PC-3 (cell line): ENCODE measurements at regions of chr11 and their contacts with region 1.

Region 1: DNA sequence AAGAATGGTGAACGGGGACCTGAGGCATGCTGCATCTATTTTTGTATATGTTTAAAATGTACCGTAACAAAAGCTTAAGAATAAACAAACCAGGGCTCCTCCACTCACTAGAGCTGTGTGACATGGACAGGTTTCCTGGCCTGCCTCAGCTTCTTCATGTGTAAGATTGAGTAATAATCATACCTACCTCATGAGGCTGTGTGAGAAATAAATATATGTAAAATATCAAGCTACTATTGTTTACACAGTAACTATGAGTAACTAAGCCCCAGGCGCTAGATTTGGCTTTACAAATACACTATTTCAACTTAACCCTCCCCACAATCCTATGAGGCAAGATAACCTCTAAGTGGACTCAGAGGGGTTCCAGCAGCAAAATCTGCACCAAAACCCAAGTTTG is 66.4 kb downstream of the SMCO4 start:
- DNase-seq: peak; percentile 98
- ATAC-seq: peak; percentile 79
- H3K4me3 ChIP-seq: peak overlapping the region; percentile 11; the same call in 1 of the 2 replicates
- H3K27ac ChIP-seq: peak overlapping the region; percentile 89
- H3K4me1 ChIP-seq: peaks cover 44% of the 10 kb centered on the region
- H3K27me3 ChIP-seq: no peaks in the 10 kb centered on the region
- CTCF ChIP-seq: no peak

Region 2: DNA sequence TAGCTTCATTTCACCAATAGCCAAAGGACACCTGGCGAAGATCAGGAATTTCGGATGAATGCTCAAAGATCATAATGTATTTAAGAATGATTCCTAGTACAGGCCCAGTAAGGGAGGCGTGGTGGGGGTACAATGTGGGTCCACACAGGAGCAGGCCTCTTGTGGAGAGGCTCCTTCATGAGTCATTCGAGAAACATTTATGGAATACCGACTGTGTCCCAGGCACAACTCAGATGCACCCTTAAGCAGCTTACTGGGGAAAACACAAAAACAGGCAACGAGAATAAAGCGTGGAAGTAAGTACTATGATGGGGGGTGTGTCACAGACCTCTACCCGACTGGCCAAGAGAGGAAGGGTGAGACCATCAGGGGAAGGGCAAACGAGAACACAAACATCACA is 21.8 kb after region 1 on chr11:
- CTCF ChIA-PET with region 1: no interaction called
- POLR2A ChIA-PET with region 1: no interaction called
- intact Hi-C with region 1: loop called (anchors 2 kb)
- DNase-seq: peak; percentile 67
- ATAC-seq: peak; percentile 83
- H3K4me3 ChIP-seq: peak overlapping the region; percentile 0; the same call in 1 of the 2 replicates
- H3K27ac ChIP-seq: peak overlapping the region; percentile 67
- H3K4me1 ChIP-seq: peaks cover 25% of the 10 kb centered on the region
- H3K27me3 ChIP-seq: no peaks in the 10 kb centered on the region
- CTCF ChIP-seq: no peak

Region 3: GRCh38 chr11:93857413-93858120 is 380.8 kb after region 1 on chr11:
- CTCF ChIA-PET with region 1: no interaction called
- POLR2A ChIA-PET with region 1: no interaction called
- intact Hi-C with region 1: no loop called
- DNase-seq: peak; percentile 22
- ATAC-seq: peak; percentile 83
- H3K4me3 ChIP-seq: no peak overlapping the region
- H3K27ac ChIP-seq: no peak overlapping the region
- H3K4me1 ChIP-seq: peaks cover 4% of the 10 kb centered on the region; the same call in 1 of the 2 replicates
- H3K27me3 ChIP-seq: no peaks in the 10 kb centered on the region
- CTCF ChIP-seq: no peak